Naive thymus-derived CD4-positive, alpha-beta T cell (primary cell): ENCODE measurements at regions of chr12 and their contacts with region 1.

Region 1: DNA sequence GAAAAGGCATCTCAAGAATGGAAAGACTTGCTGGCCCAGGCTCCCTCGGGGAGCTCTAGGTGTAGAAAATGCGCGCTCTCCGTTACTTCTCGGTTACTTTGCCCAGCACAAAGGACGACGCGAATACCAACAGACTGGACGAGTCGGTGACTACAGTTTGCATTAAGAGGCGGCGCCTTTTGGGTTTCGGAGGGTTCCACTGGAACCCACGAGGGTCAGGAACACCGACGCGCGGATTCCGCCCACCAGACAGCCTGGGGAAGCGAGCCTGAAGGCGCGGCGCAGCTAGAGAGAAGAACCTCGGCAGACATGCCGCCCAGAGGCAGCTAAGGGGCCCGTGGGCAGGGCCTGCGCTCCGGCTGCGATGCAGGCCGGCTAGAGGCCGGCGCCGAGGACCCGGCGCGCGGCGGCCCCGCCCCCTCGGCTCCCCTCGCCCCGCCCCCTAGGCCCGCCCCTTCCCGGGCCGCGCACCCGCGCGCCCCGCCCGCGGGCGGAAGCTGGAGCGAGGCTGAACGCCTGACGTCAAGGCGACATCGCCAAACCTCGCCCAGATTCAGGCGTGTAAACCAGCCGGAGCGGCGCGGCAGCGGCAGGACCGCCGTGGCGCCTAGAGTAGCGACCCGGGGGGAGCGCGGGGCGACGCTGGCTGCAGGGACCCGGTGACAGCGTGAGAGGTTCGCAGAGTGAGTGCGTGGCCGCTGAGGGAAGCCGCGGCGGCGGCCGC is at the start of gene RAP1B:
- DNase-seq: peak; percentile 86 to 92 (median 89)
- ATAC-seq: peak; percentile 92
- H3K4me3 ChIP-seq: peak within 1 kb of the TSS; percentile 89
- H3K4me3 Mint-ChIP-seq: peak within 1 kb of the TSS; percentile 93 to 99 (median 98)
- H3K27ac ChIP-seq: peak within 1 kb of the TSS; percentile 97
- H3K27ac Mint-ChIP-seq: peak within 1 kb of the TSS; percentile 95 to 99 (median 98)
- H3K4me1 ChIP-seq: peaks cover 15 to 18% of the 10 kb centered on the region in 2 donors
- H3K4me1 Mint-ChIP-seq: peaks cover 36 to 46% (median 41%) of the 10 kb centered on the region in 7 donors
- H3K27me3 ChIP-seq: no peaks in the 10 kb centered on the region
- H3K27me3 Mint-ChIP-seq: no peaks in the 10 kb centered on the region
- total RNA-seq, gene RAP1B: 202 to 287 (median 223) TPM

Region 2: DNA sequence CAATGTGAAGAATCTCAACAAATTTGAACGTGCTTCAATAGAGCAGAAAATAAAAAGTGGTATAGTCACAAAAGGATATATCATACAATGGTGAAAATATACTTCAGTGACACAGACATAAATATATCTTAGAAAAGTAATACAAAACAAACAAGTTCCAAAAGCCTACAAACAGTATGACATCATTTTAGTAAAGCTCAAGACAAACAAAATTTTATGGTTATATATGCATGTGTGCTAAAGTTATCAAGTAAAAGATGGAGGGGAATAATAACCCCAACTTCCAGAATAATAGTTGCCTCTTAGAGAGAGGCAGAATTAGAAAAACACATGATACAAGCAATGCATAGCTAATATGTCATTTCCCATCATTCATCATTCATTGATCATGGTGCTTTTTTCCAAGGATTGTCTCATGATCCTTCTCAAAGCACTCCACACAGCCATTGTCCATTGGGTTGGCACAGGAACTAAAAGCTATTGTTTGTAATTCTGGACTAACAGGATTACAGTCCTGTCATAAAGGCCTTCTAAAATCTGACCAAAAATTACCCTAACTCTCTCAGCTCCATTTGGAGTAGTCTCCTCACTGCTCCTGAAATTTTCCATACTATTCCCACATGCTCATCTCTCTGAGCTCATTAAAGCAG is 561.8 kb before region 1 on chr12:
- CTCF ChIA-PET with region 1: no interaction called
- POLR2A ChIA-PET with region 1: no interaction called
- intact Hi-C with region 1: no loop called
- DNase-seq: no peak
- ATAC-seq: no peak
- H3K4me3 ChIP-seq: no peak overlapping the region
- H3K4me3 Mint-ChIP-seq: no peak overlapping the region
- H3K27ac ChIP-seq: no peak overlapping the region
- H3K27ac Mint-ChIP-seq: no peak overlapping the region
- H3K4me1 ChIP-seq: no peaks in the 10 kb centered on the region
- H3K4me1 Mint-ChIP-seq: no peaks in the 10 kb centered on the region
- H3K27me3 ChIP-seq: no peaks in the 10 kb centered on the region
- H3K27me3 Mint-ChIP-seq: peaks cover 0 to 2% (median 0%) of the 10 kb centered on the region in 5 donors

Region 3: GRCh38 chr12:68137335-68137830 is 473.1 kb before region 1 on chr12:
- CTCF ChIA-PET with region 1: no interaction called
- POLR2A ChIA-PET with region 1: no interaction called
- intact Hi-C with region 1: no loop called
- DNase-seq: peak in 5 of 9 donors; percentile 6 to 22 (median 10)
- ATAC-seq: peak; percentile 26
- H3K4me3 ChIP-seq: no peak overlapping the region
- H3K4me3 Mint-ChIP-seq: peak overlapping the region; percentile 4 to 71 (median 51)
- H3K27ac ChIP-seq: no peak overlapping the region
- H3K27ac Mint-ChIP-seq: peak overlapping the region in 7 of 9 donors; percentile 33 to 90 (median 65)
- H3K4me1 ChIP-seq: peaks cover 16 to 17% of the 10 kb centered on the region in 2 donors
- H3K4me1 Mint-ChIP-seq: peaks cover 8 to 56% (median 43%) of the 10 kb centered on the region in 7 donors
- H3K27me3 ChIP-seq: no peaks in the 10 kb centered on the region
- H3K27me3 Mint-ChIP-seq: no peaks in the 10 kb centered on the region

Region 4: DNA sequence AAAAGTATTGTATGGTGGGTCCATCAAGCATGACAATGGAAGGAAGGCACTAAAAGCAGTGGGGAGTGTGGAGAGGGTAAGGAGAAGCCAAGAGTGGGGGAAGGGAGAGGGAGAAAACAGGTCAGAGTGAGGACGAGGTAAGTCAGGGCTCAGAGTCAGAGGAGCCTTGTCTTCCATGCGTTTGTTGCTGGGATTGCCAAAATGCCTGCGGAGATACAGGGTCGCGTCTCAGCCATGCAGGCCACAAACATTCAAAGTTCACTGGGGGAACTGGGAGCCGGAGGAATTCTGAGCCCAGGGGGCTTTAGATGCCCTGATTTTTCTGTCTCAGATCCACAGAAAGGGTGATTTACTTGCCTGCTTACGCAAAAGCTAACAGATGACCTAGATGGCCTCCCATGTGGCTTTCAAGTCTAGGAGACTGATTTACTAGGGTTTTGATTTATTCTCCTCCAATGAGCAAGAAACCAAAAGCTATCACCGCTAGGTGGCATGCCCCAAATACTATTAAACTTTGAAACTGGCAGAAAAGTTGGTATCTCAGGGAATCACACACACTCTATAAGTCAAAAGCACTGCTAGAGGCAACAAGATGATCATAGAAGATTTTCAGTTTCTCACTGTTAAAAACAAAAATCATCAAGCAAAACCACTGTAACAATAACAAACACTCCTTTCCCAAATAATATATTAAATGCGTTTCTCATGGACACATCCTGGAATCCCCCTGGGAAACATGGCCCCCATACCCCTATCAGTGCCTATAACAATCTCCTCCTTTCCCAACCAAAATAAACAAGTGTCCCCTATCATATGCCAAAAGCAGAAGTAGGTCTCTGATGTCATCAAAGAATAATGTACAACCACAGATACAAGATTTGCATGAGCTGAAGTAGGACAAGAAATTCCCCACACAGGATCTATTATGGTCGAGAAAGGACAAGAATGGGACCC is 251.7 kb before region 1 on chr12:
- CTCF ChIA-PET with region 1: interaction called, 4 read pairs
- POLR2A ChIA-PET with region 1: interaction called, 12 read pairs
- intact Hi-C with region 1: loop called (anchors 1 kb)
- DNase-seq: peak in 7 of 9 donors; percentile 56 to 80 (median 76)
- ATAC-seq: peak; percentile 84
- H3K4me3 ChIP-seq: no peak overlapping the region
- H3K4me3 Mint-ChIP-seq: peak overlapping the region in 1 of 10 donors; percentile 38
- H3K27ac ChIP-seq: no peak overlapping the region
- H3K27ac Mint-ChIP-seq: peak overlapping the region in 2 of 9 donors; percentile 56 to 72
- H3K4me1 ChIP-seq: peaks cover 13 to 17% of the 10 kb centered on the region in 2 donors
- H3K4me1 Mint-ChIP-seq: peaks cover 25 to 36% (median 30%) of the 10 kb centered on the region in 7 donors
- H3K27me3 ChIP-seq: no peaks in the 10 kb centered on the region
- H3K27me3 Mint-ChIP-seq: no peaks in the 10 kb centered on the region

Region 5: DNA sequence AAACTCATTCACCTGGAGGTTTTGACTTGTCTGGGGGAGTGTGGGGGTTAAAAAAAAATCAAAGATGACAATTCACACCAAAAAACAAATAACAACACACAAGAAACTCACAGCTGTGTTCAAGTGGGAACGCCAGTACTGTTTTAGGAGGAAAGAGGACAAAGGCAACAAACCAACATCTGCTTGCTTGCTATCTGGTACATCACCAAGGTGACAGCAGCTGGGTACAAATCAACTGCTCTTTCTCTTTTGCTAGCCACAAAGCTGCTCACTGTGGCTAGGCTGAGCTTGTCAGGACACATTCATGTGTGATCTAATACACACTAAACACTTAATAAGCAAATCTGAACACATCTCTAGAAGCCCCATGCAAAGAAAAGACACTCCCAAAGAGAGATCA is 127.9 kb before region 1 on chr12:
- CTCF ChIA-PET with region 1: no interaction called
- POLR2A ChIA-PET with region 1: no interaction called
- intact Hi-C with region 1: loop called in 1 of 2 experiments (anchors 1 kb)
- DNase-seq: no peak
- ATAC-seq: peak; percentile 67
- H3K4me3 ChIP-seq: no peak overlapping the region
- H3K4me3 Mint-ChIP-seq: peak overlapping the region in 1 of 10 donors; percentile 74
- H3K27ac ChIP-seq: no peak overlapping the region
- H3K27ac Mint-ChIP-seq: peak overlapping the region in 5 of 9 donors; percentile 8 to 86 (median 65)
- H3K4me1 ChIP-seq: peaks cover 0 to 27% of the 10 kb centered on the region in 2 donors
- H3K4me1 Mint-ChIP-seq: peaks cover 10 to 46% (median 27%) of the 10 kb centered on the region in 7 donors
- H3K27me3 ChIP-seq: no peaks in the 10 kb centered on the region
- H3K27me3 Mint-ChIP-seq: no peaks in the 10 kb centered on the region

Region 6: DNA sequence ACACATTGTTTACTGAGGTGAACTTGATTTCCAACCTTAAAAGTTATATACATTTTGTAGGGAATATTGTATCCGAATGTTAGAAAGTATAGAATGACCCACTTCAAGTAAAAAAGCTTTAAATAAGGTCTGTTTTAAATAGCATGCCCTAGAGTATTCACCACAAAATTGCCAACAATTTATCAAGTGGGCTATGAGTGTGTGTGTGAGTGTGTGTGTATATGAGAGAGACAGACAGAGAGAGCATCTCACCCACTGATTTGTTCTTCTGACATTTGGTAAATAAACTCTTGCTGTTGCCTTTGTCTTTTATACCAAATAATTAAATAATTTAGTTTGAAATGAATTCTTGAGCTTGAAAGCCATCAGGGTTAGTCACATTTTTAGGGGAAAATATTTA is 29.6 kb before region 1 on chr12:
- CTCF ChIA-PET with region 1: no interaction called
- POLR2A ChIA-PET with region 1: interaction called, 18 read pairs
- intact Hi-C with region 1: loop called in 1 of 2 experiments (anchors 5 kb)
- DNase-seq: no peak
- ATAC-seq: no peak
- H3K4me3 ChIP-seq: no peak overlapping the region
- H3K4me3 Mint-ChIP-seq: no peak overlapping the region
- H3K27ac ChIP-seq: no peak overlapping the region
- H3K27ac Mint-ChIP-seq: no peak overlapping the region
- H3K4me1 ChIP-seq: peaks cover 9 to 18% of the 10 kb centered on the region in 2 donors
- H3K4me1 Mint-ChIP-seq: peaks cover 26 to 75% (median 57%) of the 10 kb centered on the region in 7 donors
- H3K27me3 ChIP-seq: no peaks in the 10 kb centered on the region
- H3K27me3 Mint-ChIP-seq: no peaks in the 10 kb centered on the region

Region 7: DNA sequence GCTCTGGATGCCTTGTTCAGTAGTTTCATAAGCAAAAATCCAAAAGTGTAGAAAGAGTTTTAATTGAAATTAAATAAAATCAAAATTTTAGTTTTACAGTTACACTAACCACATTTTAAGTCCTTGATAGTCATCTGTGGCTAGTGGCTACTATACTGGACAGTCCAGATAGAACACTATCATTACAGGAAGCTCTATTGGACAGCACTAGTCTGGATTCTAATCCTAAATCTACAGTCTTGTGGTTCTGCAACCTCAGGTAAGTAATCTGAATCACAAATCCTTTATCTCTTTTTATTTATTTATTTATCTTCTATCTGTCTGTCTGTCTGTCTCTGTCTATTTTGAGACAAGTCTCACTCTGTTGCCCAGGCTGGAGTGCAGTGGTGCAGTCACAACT is 18.2 kb after region 1 on chr12:
- CTCF ChIA-PET with region 1: interaction called, 4 read pairs
- POLR2A ChIA-PET with region 1: interaction called, 10 read pairs
- intact Hi-C with region 1: loop called (anchors 2 kb)
- DNase-seq: no peak
- ATAC-seq: peak; percentile 27
- H3K4me3 ChIP-seq: no peak overlapping the region
- H3K4me3 Mint-ChIP-seq: peak overlapping the region in 9 of 10 donors; percentile 44 to 83 (median 76)
- H3K27ac ChIP-seq: peak overlapping the region; percentile 22
- H3K27ac Mint-ChIP-seq: peak overlapping the region in 8 of 9 donors; percentile 55 to 87 (median 82)
- H3K4me1 ChIP-seq: peaks cover 32 to 50% of the 10 kb centered on the region in 2 donors
- H3K4me1 Mint-ChIP-seq: peaks cover 48 to 95% (median 88%) of the 10 kb centered on the region in 7 donors
- H3K27me3 ChIP-seq: no peaks in the 10 kb centered on the region
- H3K27me3 Mint-ChIP-seq: no peaks in the 10 kb centered on the region

Region 8: DNA sequence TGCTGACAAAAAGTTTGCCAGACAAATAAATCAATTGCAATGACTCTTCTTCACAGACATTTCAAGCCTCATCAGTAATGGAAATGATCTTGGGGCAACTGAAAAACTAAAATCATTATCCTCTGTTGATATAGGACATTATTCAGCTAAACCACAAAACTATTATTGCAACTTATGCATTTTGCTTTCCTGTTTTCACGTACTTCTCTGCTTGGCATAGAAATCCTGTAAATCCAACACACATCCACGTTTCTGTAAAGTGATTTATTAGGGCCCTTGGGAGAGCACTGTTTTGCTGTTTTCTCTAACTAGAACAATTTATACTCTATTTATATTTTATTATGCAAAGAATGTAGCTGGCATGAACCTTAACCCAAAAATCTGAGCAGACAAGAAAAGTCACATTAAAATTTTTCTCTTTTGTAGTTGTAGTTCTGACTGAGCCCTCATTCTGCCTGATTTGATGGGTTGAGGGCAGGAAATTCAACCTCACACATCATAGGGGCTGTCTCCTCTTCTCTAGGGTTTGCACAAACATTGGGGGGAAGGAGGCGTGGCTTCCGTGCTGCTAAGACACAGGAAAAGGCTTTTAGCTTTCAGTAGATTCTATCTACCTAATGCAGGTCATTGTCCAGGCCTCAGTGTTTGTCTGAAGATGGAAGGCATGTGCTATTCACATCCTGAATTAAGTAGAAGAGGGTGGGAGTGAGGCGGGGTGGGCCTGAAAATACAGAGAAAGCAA is 64.7 kb after region 1 on chr12:
- CTCF ChIA-PET with region 1: interaction called, 5 read pairs
- POLR2A ChIA-PET with region 1: interaction called, 18 read pairs
- intact Hi-C with region 1: loop called (anchors 1 to 2 kb)
- DNase-seq: peak; percentile 30 to 87 (median 78)
- ATAC-seq: peak; percentile 98
- H3K4me3 ChIP-seq: peak overlapping the region; percentile 17
- H3K4me3 Mint-ChIP-seq: peak overlapping the region; percentile 55 to 90 (median 80)
- H3K27ac ChIP-seq: peak overlapping the region; percentile 46
- H3K27ac Mint-ChIP-seq: peak overlapping the region; percentile 83 to 95 (median 89)
- H3K4me1 ChIP-seq: peaks cover 30 to 32% of the 10 kb centered on the region in 2 donors
- H3K4me1 Mint-ChIP-seq: peaks cover 27 to 73% (median 63%) of the 10 kb centered on the region in 7 donors
- H3K27me3 ChIP-seq: no peaks in the 10 kb centered on the region
- H3K27me3 Mint-ChIP-seq: no peaks in the 10 kb centered on the region

Region 9: DNA sequence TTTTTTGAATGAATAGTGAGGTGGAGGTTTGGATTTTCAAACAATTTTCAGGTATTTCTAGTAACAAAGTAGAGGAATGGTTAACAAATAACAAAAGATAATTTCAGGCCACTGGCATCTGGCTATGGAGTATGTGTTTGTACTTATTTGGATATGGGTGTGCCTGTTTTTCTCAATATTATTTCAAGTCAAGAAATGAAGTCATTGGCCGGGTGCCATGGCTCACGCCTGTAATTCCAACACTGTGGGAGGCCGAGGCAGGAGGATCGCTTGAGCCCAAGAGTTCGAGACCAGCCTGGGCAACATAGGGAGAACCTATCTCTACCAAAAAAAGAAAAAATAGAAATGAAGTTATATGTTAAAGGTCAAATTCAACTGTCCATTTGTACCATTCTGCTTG is 149.3 kb after region 1 on chr12:
- CTCF ChIA-PET with region 1: no interaction called
- POLR2A ChIA-PET with region 1: no interaction called
- intact Hi-C with region 1: no loop called
- DNase-seq: no peak
- ATAC-seq: no peak
- H3K4me3 ChIP-seq: no peak overlapping the region
- H3K4me3 Mint-ChIP-seq: no peak overlapping the region
- H3K27ac ChIP-seq: no peak overlapping the region
- H3K27ac Mint-ChIP-seq: no peak overlapping the region
- H3K4me1 ChIP-seq: no peaks in the 10 kb centered on the region
- H3K4me1 Mint-ChIP-seq: peaks cover 0 to 11% (median 3%) of the 10 kb centered on the region in 7 donors
- H3K27me3 ChIP-seq: no peaks in the 10 kb centered on the region
- H3K27me3 Mint-ChIP-seq: no peaks in the 10 kb centered on the region